Activated CD4-positive, alpha-beta memory T cell treated with anti-CD3 and anti-CD28 coated beads for 36 hours (primary cell): ENCODE measurements at regions of chr15 and their contacts with region 1.

Region 1: DNA sequence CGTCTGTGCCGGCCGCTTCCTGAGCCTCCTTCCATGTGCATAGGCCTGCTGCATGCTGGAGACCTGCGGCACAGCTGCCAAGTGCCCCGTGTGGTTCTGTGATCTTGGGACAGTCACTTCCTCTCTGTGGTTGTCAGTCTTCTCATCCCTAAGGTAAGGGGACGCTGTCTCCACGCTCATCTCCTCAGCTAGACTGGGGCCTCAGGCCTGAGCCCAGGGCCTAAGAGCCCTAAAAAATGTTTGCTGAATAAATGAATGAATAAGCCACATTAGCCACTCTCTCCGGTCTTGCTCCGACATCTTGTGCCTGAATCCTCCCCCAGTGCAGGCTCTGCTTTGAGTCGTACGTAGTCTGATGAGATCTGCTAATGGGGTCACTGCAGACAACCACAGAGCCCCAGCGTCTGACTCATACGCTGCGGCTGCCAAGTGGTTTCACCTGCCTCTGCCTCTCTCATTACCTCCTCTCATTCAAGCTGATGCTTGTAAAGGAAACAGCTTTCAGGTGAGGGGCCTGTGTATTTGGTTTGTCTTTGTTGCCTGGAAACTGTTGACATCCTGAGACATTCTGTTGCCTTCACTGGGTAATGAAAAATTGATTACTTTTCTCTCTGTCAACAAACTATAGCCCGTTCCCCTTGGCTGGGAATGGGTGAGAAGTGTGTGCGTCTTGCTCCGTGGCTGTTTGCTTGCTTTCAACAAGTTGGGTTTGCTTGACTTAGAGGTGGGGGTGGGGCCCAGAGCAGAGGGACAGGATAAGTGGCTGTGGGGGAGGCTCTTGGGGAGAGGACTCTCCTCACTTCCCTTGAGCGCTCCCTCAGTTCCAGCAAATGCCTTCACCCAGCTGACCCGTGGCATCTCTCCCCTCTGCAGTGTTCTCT is 15.9 kb downstream of the RPLP1 start:
- DNase-seq: peak; percentile 92
- H3K4me3 Mint-ChIP-seq: peak overlapping the region; percentile 30
- H3K27ac Mint-ChIP-seq: peak overlapping the region; percentile 83
- H3K4me1 Mint-ChIP-seq: peaks cover 38% of the 10 kb centered on the region
- H3K27me3 Mint-ChIP-seq: no peaks in the 10 kb centered on the region

Region 2: DNA sequence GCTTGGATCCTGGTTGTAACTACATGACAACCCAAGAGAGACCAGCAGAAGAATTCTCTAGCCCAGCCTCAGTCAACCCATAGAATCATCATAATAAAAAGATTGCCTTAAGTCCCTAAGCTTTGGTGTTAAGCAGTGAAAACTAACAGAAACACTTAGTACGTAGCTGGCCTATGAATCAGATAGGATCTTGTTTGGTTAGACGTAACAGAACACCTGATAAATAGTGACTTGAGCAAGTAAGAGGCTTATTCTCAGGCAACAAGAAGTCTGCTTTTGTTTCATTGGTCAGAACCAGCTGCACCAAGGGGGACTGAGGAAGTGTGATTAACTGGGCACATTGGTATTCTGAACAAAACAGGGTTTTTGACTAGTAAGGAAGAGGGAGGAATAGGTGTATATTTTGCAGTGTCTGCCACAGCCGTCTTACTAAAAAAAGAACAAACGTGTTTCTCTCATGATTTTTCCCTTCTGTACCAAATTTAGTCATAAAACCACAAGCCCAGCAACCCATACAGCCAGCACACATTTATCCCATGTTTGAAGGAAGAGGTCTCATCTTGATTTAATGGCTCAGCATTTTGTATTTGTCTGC is 361.4 kb before region 1 on chr15:
- CTCF ChIA-PET with region 1: interaction called, 3 read pairs
- POLR2A ChIA-PET with region 1: no interaction called
- intact Hi-C with region 1: loop called (anchors 5 kb)
- DNase-seq: no peak
- H3K4me3 Mint-ChIP-seq: no peak overlapping the region
- H3K27ac Mint-ChIP-seq: peak overlapping the region; percentile 23
- H3K4me1 Mint-ChIP-seq: peaks cover 30% of the 10 kb centered on the region
- H3K27me3 Mint-ChIP-seq: no peaks in the 10 kb centered on the region

Region 3: DNA sequence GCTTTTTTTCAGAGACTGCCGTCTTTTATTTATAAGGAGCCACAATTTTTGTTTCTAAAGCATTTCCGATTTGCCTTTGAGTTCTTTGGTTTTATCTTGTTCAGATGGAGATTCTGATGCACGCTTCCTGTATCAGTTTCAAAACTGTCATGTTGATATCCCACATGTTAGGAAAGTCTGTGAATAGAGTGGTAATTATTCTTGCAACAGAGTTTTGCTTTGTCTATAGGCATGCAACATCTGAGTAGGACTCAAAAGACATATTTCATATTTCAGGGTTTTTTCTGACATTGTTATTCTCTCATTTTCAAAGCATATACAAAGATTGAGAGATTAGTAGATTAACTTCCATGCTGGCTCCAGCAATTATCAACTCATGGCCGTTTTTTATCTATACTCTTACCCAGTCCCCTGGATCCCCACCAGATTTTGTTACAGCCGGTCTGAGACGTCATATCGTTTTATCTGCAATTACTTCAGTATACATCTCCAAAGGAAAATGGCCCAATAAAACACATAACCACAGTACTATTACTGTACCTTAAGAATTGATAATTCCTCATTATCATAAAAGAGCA is 147.4 kb before region 1 on chr15:
- CTCF ChIA-PET with region 1: no interaction called
- POLR2A ChIA-PET with region 1: no interaction called
- intact Hi-C with region 1: loop called (anchors 1 kb)
- DNase-seq: no peak
- H3K4me3 Mint-ChIP-seq: no peak overlapping the region
- H3K27ac Mint-ChIP-seq: no peak overlapping the region
- H3K4me1 Mint-ChIP-seq: peaks cover 13% of the 10 kb centered on the region
- H3K27me3 Mint-ChIP-seq: peaks cover 13% of the 10 kb centered on the region

Region 4: GRCh38 chr15:69346112-69346511 is 122.4 kb before region 1 on chr15:
- CTCF ChIA-PET with region 1: no interaction called
- POLR2A ChIA-PET with region 1: no interaction called
- intact Hi-C with region 1: no loop called
- DNase-seq: no peak
- H3K4me3 Mint-ChIP-seq: no peak overlapping the region
- H3K27ac Mint-ChIP-seq: no peak overlapping the region
- H3K4me1 Mint-ChIP-seq: no peaks in the 10 kb centered on the region
- H3K27me3 Mint-ChIP-seq: no peaks in the 10 kb centered on the region

Region 5: DNA sequence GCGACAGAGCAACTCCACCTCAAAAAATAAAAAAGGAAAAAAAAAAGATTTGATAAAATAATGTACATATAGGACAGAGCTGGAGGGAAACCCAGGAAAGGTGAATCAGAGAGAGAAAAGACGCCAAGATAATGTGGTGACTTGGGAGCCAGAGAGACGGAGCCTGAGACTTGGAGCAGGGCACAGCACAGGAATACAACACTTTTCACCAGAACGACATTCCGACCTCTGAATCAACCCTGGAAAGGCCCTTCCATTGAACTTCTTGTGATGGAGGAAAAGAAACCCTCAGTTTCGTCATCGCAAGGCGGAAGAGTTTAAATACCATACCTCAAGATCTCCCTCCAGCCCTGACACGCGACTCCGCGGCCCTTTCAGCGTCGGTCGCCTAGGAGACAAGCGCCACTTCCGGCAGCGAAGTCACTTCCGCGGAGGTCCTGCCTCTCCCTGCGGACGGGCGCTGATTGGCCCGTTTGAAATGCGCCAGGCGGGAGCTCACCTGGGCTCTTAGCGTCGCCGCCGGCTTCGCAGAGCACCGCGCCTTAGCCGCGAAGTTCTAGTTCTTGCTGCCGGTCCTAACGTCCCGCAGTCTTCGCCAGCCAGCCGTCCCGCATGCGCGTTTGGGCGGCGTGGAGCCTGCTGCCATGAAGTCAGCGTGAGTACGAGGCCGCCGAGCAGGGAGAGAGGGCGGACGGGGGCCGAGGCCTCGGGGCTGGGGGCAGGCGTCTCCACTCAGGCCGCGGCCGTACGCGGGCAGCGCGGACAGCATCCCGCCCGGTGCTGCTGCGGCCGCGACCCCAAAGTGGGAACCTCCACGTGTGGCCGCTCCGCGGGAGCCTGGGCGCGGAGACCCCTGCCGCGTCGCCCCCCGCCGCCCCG is 54.4 kb before region 1 on chr15 and contains the start of gene KIF23:
- CTCF ChIA-PET with region 1: interaction called, 14 read pairs
- POLR2A ChIA-PET with region 1: no interaction called
- intact Hi-C with region 1: loop called (anchors 1 kb)
- DNase-seq: peak; percentile 95
- H3K4me3 Mint-ChIP-seq: peak within 1 kb of the TSS; percentile 82
- H3K27ac Mint-ChIP-seq: peak within 1 kb of the TSS; percentile 20
- H3K4me1 Mint-ChIP-seq: peaks cover 13% of the 10 kb centered on the region
- H3K27me3 Mint-ChIP-seq: peaks cover 14% of the 10 kb centered on the region
- total RNA-seq, gene KIF23: 55.6 to 63.1 TPM

Region 6: GRCh38 chr15:69452692-69453521 is 15.6 kb before region 1 on chr15 and contains the start of gene RPLP1:
- CTCF ChIA-PET with region 1: interaction called, 74 read pairs
- POLR2A ChIA-PET with region 1: interaction called, 105 read pairs
- intact Hi-C with region 1: loop called (anchors 1 kb)
- DNase-seq: peak; percentile 97
- H3K4me3 Mint-ChIP-seq: peak within 1 kb of the TSS; percentile 93
- H3K27ac Mint-ChIP-seq: peak within 1 kb of the TSS; percentile 95
- H3K4me1 Mint-ChIP-seq: peaks cover 23% of the 10 kb centered on the region
- H3K27me3 Mint-ChIP-seq: no peaks in the 10 kb centered on the region
- total RNA-seq, gene RPLP1: 2,547 to 2,620 TPM

Region 7: DNA sequence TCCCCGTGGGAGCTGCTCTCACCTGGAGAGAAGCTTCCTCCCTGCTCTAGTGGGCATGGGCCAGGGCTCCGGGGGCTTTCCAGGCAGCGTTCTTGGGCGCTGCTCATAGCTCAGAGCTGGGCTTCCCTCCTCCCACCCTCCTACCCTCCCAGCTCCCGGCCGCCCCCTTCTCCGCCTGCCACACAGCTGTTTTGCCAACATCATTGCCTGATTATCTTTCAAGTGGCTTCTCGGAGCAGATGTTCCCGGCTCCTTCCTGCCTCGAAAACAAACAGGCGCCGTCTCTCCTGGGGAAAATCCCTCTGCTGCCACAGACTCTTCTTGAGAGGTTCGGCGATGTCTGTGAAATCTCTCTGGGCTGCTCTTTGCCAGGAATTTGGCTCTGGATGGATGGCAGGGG is 179.7 kb after region 1 on chr15:
- CTCF ChIA-PET with region 1: no interaction called
- POLR2A ChIA-PET with region 1: no interaction called
- intact Hi-C with region 1: no loop called
- DNase-seq: no peak
- H3K4me3 Mint-ChIP-seq: no peak overlapping the region
- H3K27ac Mint-ChIP-seq: no peak overlapping the region
- H3K4me1 Mint-ChIP-seq: peaks cover 8% of the 10 kb centered on the region
- H3K27me3 Mint-ChIP-seq: peaks cover 5% of the 10 kb centered on the region

Region 8: DNA sequence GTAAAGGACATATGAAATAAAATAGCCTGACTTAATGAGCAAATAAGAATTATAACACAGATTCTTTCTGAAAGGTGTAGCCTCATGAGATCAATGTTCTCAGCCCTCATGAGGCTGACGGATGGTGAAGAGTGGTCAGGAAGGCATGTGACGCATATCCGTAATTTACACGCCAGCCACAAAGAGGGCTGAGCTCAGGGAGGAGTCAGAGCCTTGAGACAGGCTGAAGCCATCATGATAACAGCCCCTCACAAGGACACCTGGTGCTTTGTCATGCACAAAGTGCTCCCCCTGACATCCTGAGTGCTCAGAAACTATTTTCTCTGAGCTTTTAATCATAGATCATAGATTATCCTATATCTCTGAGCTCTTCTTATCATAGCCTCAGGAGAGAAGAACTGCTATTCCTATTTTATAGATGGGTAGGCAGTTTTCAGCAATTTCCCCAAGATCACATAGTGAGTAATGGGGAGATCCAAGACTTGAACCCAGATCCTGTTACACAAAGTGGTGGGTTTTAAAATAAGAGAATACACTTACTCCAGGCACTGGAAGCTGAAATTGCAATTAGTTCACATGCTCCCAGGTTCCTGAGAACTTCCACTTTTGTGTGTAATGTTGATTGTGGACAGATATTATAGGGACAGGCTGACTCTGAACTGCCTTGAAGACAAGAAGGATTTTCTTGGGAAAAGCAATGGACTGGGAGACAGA is 251.2 kb after region 1 on chr15:
- CTCF ChIA-PET with region 1: no interaction called
- POLR2A ChIA-PET with region 1: no interaction called
- intact Hi-C with region 1: loop called (anchors 2 kb)
- DNase-seq: peak; percentile 83
- H3K4me3 Mint-ChIP-seq: no peak overlapping the region
- H3K27ac Mint-ChIP-seq: peak overlapping the region; percentile 87
- H3K4me1 Mint-ChIP-seq: peaks cover 84% of the 10 kb centered on the region
- H3K27me3 Mint-ChIP-seq: peaks cover 3% of the 10 kb centered on the region

Region 9: GRCh38 chr15:69939513-69940440 is 471.3 kb after region 1 on chr15:
- CTCF ChIA-PET with region 1: no interaction called
- POLR2A ChIA-PET with region 1: no interaction called
- intact Hi-C with region 1: no loop called
- DNase-seq: no peak
- H3K4me3 Mint-ChIP-seq: no peak overlapping the region
- H3K27ac Mint-ChIP-seq: no peak overlapping the region
- H3K4me1 Mint-ChIP-seq: no peaks in the 10 kb centered on the region
- H3K27me3 Mint-ChIP-seq: no peaks in the 10 kb centered on the region

Region 10: GRCh38 chr15:70810916-70811578 is 1342.6 kb after region 1 on chr15:
- CTCF ChIA-PET with region 1: no interaction called
- POLR2A ChIA-PET with region 1: no interaction called
- intact Hi-C with region 1: loop called (anchors 5 kb)
- DNase-seq: no peak
- H3K4me3 Mint-ChIP-seq: no peak overlapping the region
- H3K27ac Mint-ChIP-seq: no peak overlapping the region
- H3K4me1 Mint-ChIP-seq: no peaks in the 10 kb centered on the region
- H3K27me3 Mint-ChIP-seq: peaks cover 2% of the 10 kb centered on the region